MCF 10A (cell line): ENCODE measurements at regions of chr9 and their contacts with region 1.

Region 1: GRCh38 chr9:129460323-129461261 is 160.3 kb downstream of the C9orf50 start:
- DNase-seq: peak; percentile 97
- H3K4me3 Mint-ChIP-seq: peak overlapping the region; percentile 64
- H3K27ac Mint-ChIP-seq: peak overlapping the region; percentile 86
- H3K4me1 Mint-ChIP-seq: peaks cover 7% of the 10 kb centered on the region
- H3K27me3 Mint-ChIP-seq: no peaks in the 10 kb centered on the region
- CTCF ChIP-seq: no peak

Region 2: DNA sequence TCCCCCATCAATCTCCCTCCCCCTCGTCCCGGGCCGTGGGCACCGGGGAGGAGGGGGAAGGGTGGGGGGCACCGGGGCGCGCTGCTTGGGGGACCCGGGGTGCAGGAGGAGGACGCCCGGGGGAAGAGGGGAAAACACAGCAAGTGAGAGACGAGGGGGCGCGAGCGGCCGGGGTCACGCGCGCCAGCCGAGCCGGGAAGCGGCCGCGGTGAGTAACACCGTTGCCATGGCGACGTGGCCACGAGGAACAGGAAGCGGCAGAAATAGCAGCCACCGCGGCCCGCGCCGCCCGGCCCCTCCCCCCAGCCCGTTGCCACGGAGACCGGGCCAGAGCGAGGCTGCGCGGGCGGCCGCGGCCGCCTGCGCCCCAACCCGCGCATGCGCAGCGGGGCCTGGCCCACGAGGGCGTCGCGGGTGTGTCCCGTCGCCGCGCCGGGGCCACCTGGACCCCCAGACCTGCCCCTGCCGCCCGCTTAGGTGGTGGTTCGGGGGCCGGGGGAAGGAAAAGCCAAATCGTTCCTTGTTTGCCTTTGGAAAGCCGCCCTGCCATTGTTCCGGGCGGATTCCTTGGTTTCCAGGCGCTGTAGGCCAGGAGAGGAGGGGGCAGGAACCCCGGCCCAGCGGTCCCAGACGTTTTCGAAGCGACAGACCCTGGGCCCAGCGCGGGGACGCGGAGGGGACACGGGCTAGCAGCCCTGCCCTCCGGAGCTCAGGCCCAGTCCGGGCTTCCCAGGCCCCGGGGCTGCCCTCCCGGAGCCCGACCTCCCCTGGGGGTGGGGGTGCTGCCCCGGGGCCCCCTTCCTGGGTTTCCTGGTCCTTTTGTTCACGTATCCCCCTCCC is 46.8 kb before region 1 on chr9:
- CTCF ChIA-PET with region 1: no interaction called
- POLR2A ChIA-PET with region 1: interaction called, 6 read pairs
- intact Hi-C with region 1: loop called (anchors 2 kb)
- DNase-seq: peak; percentile 95
- H3K4me3 Mint-ChIP-seq: peak overlapping the region; percentile 73
- H3K27ac Mint-ChIP-seq: peak overlapping the region; percentile 95
- H3K4me1 Mint-ChIP-seq: no peaks in the 10 kb centered on the region
- H3K27me3 Mint-ChIP-seq: no peaks in the 10 kb centered on the region
- CTCF ChIP-seq: no peak